ENCODE measurements at regions of chr17 and their contacts with region 1.

Region 1: DNA sequence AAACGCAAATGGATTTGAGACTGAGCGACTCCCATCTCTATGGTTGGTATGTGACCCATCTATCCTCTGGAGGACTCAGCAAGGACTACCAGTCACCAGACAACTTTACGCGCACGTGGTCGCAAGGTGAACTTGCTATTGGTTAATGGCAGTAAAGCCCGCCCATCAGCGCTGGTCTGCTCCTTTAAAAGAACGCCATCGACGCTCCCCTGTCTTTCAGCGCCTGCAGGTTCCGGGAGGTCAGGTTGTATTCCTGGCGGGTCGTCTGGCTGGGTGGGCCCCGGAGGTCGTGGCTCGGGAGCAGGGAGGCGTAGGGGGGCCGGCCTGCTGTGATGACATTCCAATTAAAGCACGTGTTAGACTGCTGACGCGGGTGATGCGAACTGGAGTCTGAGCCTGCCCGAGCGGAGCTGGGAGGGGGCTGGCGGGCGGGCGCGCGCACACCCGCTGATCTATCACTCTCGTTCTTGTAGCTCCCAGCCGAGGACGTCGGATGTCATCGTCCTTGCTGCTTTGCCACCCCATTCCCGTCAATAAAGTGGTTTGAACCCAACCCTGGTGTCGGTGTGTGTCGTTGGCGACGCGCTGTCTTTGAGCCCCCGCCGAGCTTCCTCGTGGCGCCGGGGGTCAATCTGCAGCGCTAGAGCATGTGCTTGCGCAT is 15.9 kb upstream of the ERN1 start:
- DNase-seq: peak; percentile 84
- ATAC-seq: peak; percentile 94
- H3K4me3 Mint-ChIP-seq: no peak overlapping the region
- H3K27ac Mint-ChIP-seq: no peak overlapping the region
- H3K4me1 Mint-ChIP-seq: peaks cover 16% of the 10 kb centered on the region
- H3K27me3 Mint-ChIP-seq: no peaks in the 10 kb centered on the region
- CTCF ChIP-seq: no peak

Region 2: DNA sequence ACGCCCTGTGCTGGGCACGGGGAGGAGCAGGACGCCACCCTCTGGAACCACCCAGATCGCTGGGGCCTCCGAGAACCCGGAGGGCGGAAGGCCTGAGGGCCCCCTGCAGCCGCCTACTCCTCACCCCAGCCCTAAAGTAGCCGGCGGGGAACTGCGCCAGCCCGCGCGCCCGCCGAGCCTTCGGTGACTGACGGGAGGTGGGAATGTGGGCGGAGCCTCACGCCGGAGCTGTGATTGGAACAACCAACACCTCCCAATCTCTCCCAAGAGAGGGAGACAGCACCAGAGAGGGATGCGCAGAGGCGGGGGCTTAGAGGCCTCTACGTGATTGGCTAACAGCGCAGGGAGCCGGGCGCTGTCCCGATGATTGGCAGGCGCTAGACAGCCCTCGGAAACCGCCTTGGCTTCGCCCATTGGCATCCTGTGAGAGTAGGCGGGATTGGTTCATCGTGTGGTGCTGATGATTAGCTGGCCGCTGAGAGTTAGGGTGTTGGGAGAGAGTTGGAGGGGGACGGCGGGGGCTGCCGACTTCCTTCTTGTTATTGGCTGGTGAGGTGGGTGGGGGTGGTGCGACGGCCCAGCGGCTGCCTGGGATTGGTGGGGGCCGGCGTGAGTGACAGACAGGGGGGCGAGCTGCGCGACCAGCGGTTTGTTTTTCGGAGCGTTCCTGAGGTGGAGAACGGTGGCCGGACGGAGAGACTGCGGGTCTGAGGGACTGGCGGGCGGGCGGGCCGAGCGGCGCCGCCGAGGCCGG is 523.9 kb before region 1 on chr17 and contains the start of gene MAP3K3:
- CTCF ChIA-PET with region 1: no interaction called
- POLR2A ChIA-PET with region 1: interaction called, 3 read pairs
- intact Hi-C with region 1: loop called (anchors 10 kb)
- DNase-seq: peak; percentile 85
- ATAC-seq: peak; percentile 89
- H3K4me3 Mint-ChIP-seq: peak within 1 kb of the TSS; percentile 95
- H3K27ac Mint-ChIP-seq: peak within 1 kb of the TSS; percentile 91
- H3K4me1 Mint-ChIP-seq: peaks cover 33% of the 10 kb centered on the region
- H3K27me3 Mint-ChIP-seq: no peaks in the 10 kb centered on the region
- CTCF ChIP-seq: no peak
- total RNA-seq, gene MAP3K3: 32.5 and 32.9 TPM in 2 replicates

Region 3: GRCh38 chr17:63911657-63912426 is 234.0 kb before region 1 on chr17:
- CTCF ChIA-PET with region 1: no interaction called
- POLR2A ChIA-PET with region 1: interaction called, 16 read pairs
- intact Hi-C with region 1: no loop called
- DNase-seq: peak; percentile 59
- ATAC-seq: peak; percentile 57
- H3K4me3 Mint-ChIP-seq: no peak overlapping the region
- H3K27ac Mint-ChIP-seq: peak overlapping the region; percentile 35
- H3K4me1 Mint-ChIP-seq: peaks cover 52% of the 10 kb centered on the region
- H3K27me3 Mint-ChIP-seq: peaks cover 1% of the 10 kb centered on the region
- CTCF ChIP-seq: no peak

Region 4: GRCh38 chr17:64020056-64020766 is 125.7 kb before region 1 on chr17 and contains the start of gene ICAM2:
- CTCF ChIA-PET with region 1: interaction called, 6 read pairs
- POLR2A ChIA-PET with region 1: interaction called, 54 read pairs
- intact Hi-C with region 1: no loop called
- DNase-seq: peak; percentile 69
- ATAC-seq: peak; percentile 78
- H3K4me3 Mint-ChIP-seq: peak within 1 kb of the TSS; percentile 97
- H3K27ac Mint-ChIP-seq: peak within 1 kb of the TSS; percentile 99
- H3K4me1 Mint-ChIP-seq: peaks cover 81% of the 10 kb centered on the region
- H3K27me3 Mint-ChIP-seq: no peaks in the 10 kb centered on the region
- CTCF ChIP-seq: no peak
- total RNA-seq, gene ICAM2: 44.5 and 44.7 TPM in 2 replicates

Region 5: DNA sequence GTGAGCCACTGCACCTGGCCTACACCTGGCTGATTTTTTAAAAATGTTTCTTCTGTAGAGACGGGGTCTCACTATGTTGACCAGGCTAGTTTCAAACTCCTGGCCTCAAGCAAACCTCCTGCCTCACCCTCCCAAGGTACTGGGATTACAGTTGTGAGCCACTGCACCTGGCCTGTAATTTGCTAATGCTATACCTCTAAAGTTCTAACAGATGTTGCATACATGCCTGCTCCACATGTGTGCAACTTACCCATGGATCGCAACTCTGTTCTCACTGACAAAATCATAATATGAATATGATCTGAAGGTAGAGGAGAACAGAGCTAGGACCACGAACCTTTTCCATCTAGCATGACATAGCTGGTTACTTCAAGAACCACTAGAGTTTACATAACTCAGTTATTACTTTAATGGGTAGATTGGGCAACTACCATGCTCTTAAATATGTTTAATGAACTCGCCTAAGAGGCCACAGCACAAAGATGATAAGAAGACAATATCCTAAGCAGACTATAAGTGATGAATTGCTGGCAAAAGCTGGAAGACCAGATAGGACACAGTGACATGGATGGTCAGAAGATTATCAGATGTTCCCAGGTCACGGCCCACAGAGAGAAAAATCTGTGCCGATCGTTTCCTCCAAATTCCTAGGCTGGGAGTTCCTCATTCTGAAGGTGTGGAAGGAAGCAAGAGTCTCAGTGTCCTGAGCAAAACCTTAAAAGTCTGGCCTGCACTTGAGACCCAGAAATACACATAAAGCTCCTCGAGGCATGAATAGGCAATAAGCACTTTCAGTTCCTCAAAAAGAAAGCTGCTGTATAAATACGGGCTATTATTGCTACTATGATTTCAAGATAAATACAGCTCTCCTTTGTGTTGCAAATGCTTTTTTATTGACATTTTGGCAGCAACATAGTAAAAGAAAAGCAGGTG is 71.8 kb before region 1 on chr17:
- CTCF ChIA-PET with region 1: no interaction called
- POLR2A ChIA-PET with region 1: interaction called, 21 read pairs
- intact Hi-C with region 1: no loop called
- DNase-seq: no peak
- ATAC-seq: peak; percentile 90
- H3K4me3 Mint-ChIP-seq: no peak overlapping the region
- H3K27ac Mint-ChIP-seq: peak overlapping the region; percentile 64
- H3K4me1 Mint-ChIP-seq: peaks cover 32% of the 10 kb centered on the region
- H3K27me3 Mint-ChIP-seq: no peaks in the 10 kb centered on the region
- CTCF ChIP-seq: no peak

Region 6: DNA sequence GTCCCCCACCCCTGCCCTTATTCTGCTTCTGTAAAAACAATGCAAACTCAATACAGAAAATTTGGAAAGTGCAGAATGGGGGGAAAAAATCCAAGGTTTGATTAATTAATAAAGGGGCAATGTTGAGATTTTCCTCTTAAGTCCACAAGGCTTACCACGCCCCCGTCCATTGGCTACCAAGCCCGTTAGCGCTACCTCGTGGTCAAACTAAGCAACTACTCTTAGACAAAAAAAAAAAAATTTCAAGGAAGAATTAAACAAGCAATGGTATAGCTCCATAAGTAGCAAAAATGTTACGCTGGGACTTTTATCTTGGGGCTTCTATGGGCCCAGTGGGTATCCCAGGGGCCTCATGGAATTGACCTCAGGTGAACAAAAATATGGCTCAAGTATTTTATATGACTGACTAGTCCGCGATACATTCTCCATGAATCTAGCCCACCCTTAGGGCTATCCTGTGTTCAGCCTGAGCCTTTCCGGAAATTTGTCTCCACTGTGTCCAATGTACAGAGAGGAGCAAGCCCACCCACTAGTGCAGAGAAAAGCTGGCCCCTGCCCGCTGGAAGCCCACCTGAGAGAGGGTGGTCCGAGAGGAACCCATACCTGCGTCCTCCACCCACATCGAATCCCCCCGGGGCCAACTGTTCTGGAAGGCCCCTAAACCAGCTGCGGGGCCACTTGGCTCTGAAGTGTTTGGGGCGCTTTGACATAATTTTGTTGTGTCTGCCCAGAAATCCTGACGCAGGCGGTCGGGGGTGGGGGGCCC is 136.3 kb after region 1 on chr17:
- CTCF ChIA-PET with region 1: interaction called, 5 read pairs
- POLR2A ChIA-PET with region 1: interaction called, 8 read pairs
- intact Hi-C with region 1: loop called (anchors 1 kb)
- DNase-seq: no peak
- ATAC-seq: peak; percentile 58
- H3K4me3 Mint-ChIP-seq: no peak overlapping the region
- H3K27ac Mint-ChIP-seq: no peak overlapping the region
- H3K4me1 Mint-ChIP-seq: no peaks in the 10 kb centered on the region
- H3K27me3 Mint-ChIP-seq: no peaks in the 10 kb centered on the region
- CTCF ChIP-seq: no peak

Measured in activated B cell treated with CpG ODN at 0.5 μM for 24 hours (primary cell).